Endothelial cell of umbilical vein (primary cell): ENCODE measurements at regions of chr1 and their contacts with region 1.

Region 1: DNA sequence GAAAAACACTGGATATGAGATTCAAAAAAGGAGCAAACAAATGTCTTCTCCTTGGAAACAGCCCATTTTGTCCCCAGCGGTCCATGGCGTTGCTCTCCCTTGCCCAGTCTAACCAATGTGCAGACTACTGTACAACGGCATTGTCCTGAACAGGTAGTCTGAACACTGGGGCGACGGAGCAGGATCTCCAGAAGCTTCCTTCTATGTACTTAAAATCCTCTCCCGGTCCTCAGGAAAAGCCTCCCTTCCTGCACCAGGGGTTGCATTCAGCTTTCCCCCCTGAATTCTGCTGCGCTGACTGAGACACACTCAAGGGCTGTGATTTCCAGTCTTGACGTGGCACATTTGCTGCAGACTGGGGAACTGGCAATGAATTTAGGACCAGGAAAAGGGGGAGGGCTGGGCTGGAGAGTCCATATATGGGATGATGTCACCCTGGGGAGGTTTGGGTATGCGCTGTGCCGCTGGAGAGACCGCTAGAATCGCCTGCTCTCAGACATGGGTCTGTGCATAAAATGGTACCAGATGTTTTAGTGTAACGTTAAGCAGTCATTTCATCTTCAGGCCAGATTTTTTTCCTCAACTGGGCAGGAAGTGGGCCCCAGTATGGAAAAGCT is 275.9 kb upstream of the C1orf105 start:
- DNase-seq: peak; percentile 76
- H3K4me3 ChIP-seq: peak overlapping the region; percentile 22 to 96 (median 38)
- H3K27ac ChIP-seq: peak overlapping the region; percentile 87
- H3K4me1 ChIP-seq: peaks cover 57% of the 10 kb centered on the region
- H3K27me3 ChIP-seq: no peaks in the 10 kb centered on the region
- CTCF ChIP-seq: no peak
- POLR2A ChIP-seq: no peak

Region 2: GRCh38 chr1:172041742-172042141 is 102.8 kb before region 1 on chr1:
- CTCF ChIA-PET with region 1: no interaction called
- POLR2A ChIA-PET with region 1: no interaction called
- dilution Hi-C with region 1: no loop called
- intact Hi-C with region 1: loop called (anchors 2 kb)
- DNase-seq: peak; percentile 45
- H3K4me3 ChIP-seq: no peak overlapping the region
- H3K27ac ChIP-seq: no peak overlapping the region
- H3K4me1 ChIP-seq: peaks cover 14% of the 10 kb centered on the region
- H3K27me3 ChIP-seq: no peaks in the 10 kb centered on the region
- CTCF ChIP-seq: peak; percentile 7 to 12
- POLR2A ChIP-seq: no peak

Region 3: GRCh38 chr1:172109359-172109758 is 35.2 kb before region 1 on chr1:
- CTCF ChIA-PET with region 1: interaction called, 4 read pairs
- POLR2A ChIA-PET with region 1: no interaction called
- dilution Hi-C with region 1: no loop called
- intact Hi-C with region 1: loop called (anchors 1 kb)
- DNase-seq: peak; percentile 66
- H3K4me3 ChIP-seq: no peak overlapping the region
- H3K27ac ChIP-seq: peak overlapping the region; percentile 28
- H3K4me1 ChIP-seq: peaks cover 48% of the 10 kb centered on the region
- H3K27me3 ChIP-seq: no peaks in the 10 kb centered on the region
- CTCF ChIP-seq: no peak
- POLR2A ChIP-seq: no peak

Region 4: DNA sequence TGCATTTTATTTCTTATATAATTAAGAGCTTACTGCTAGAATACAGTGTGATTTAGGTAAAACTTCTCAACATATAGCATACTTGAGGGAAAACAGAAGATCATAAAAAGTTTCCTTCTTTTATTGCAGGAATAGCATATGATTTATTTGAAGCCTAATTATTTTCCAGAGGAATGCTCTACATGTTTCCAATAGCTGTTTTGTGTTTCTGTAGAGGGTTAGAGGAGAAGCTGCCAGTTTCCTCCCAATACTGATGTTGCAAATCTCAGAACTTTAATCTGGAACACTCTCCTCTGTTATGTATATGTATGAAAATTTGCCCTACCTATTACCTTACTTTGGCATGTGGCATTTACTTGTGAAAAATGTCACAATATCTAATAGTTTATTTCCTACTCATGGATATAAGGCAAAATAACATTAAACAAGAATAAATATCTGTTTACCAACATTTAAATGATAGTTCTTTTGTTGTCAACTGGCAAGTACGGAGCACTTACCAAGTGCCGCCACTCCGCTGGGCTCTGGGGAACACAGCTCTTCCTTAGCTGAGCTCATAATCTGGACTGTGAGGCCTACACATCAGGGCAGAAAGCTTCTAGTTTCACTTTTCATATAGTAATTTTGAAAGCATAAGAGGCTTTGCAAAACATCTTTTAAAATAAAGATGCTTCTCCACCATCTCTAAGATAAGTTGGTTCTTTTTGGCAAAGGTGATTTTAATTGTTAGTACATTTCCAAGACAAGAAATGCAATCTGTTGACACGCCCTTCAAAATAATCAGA is 36.1 kb after region 1 on chr1:
- CTCF ChIA-PET with region 1: interaction called, 8 read pairs
- POLR2A ChIA-PET with region 1: interaction called, 3 read pairs
- dilution Hi-C with region 1: no loop called
- intact Hi-C with region 1: loop called (anchors 1 kb)
- DNase-seq: peak; percentile 75
- H3K4me3 ChIP-seq: peak overlapping the region in 1 of 3 experiments; percentile 58
- H3K27ac ChIP-seq: peak overlapping the region; percentile 46
- H3K4me1 ChIP-seq: peaks cover 11% of the 10 kb centered on the region
- H3K27me3 ChIP-seq: no peaks in the 10 kb centered on the region
- CTCF ChIP-seq: no peak
- POLR2A ChIP-seq: no peak

Region 5: DNA sequence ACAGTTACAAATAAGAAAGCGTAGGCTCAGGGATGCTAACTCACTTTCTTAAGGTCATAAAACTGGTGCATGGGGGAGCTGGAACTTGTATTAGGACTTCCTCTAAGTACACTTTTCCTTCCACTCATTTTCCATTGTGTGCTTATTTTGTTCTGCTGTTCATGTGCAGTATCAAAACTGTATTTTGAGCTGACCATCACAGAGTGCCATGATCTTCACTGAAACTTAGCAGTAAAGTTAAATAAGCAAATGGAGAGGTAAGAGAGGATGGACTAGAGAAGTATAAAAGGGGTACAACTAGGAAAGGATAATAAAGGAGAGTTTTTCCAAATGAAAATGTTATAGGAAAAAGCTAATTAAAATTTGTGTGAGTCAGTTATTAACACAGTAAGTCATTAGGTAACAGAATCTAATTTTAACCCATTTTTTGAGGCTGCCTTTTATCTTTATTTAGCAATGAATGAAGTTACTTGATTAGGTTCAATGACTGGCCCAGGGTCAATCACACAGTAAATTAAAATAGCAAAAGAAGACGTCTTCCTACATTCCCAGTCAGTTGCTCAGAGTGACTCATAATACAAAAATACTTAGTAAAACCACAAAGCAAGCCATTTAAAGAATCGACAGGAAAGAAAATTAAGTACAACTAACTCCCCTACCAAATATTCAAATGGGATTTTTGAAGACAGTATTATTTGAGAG is 110.1 kb after region 1 on chr1:
- CTCF ChIA-PET with region 1: no interaction called
- POLR2A ChIA-PET with region 1: no interaction called
- dilution Hi-C with region 1: no loop called
- intact Hi-C with region 1: loop called (anchors 1 kb)
- DNase-seq: peak; percentile 72
- H3K4me3 ChIP-seq: no peak overlapping the region
- H3K27ac ChIP-seq: peak overlapping the region; percentile 99
- H3K4me1 ChIP-seq: peaks cover 20% of the 10 kb centered on the region
- H3K27me3 ChIP-seq: no peaks in the 10 kb centered on the region
- CTCF ChIP-seq: no peak
- POLR2A ChIP-seq: no peak

Region 6: GRCh38 chr1:172343240-172344160 is 198.9 kb after region 1 on chr1:
- CTCF ChIA-PET with region 1: no interaction called
- POLR2A ChIA-PET with region 1: no interaction called
- dilution Hi-C with region 1: no loop called
- intact Hi-C with region 1: loop called (anchors 5 kb)
- DNase-seq: peak; percentile 86
- H3K4me3 ChIP-seq: peak overlapping the region in 1 of 3 experiments; percentile 32
- H3K27ac ChIP-seq: peak overlapping the region; percentile 99
- H3K4me1 ChIP-seq: peaks cover 26% of the 10 kb centered on the region
- H3K27me3 ChIP-seq: no peaks in the 10 kb centered on the region
- CTCF ChIP-seq: no peak
- POLR2A ChIP-seq: no peak

Region 7: GRCh38 chr1:172380441-172381244 is 236.1 kb after region 1 on chr1:
- CTCF ChIA-PET with region 1: no interaction called
- POLR2A ChIA-PET with region 1: no interaction called
- dilution Hi-C with region 1: no loop called
- intact Hi-C with region 1: loop called (anchors 2 kb)
- DNase-seq: peak; percentile 65
- H3K4me3 ChIP-seq: peak overlapping the region in 1 of 3 experiments; percentile 24
- H3K27ac ChIP-seq: peak overlapping the region; percentile 73
- H3K4me1 ChIP-seq: peaks cover 39% of the 10 kb centered on the region
- H3K27me3 ChIP-seq: no peaks in the 10 kb centered on the region
- CTCF ChIP-seq: no peak
- POLR2A ChIP-seq: no peak

Region 8: GRCh38 chr1:172466795-172467407 is 322.3 kb after region 1 on chr1:
- CTCF ChIA-PET with region 1: no interaction called
- POLR2A ChIA-PET with region 1: no interaction called
- dilution Hi-C with region 1: no loop called
- intact Hi-C with region 1: no loop called
- DNase-seq: no peak
- H3K4me3 ChIP-seq: no peak overlapping the region
- H3K27ac ChIP-seq: no peak overlapping the region
- H3K4me1 ChIP-seq: no peaks in the 10 kb centered on the region
- H3K27me3 ChIP-seq: peaks cover 2 to 3% of the 10 kb centered on the region in 2 experiments
- CTCF ChIP-seq: no peak
- POLR2A ChIP-seq: no peak